ENCODE measurements at regions of chr10 and their contacts with region 1.

Region 1: GRCh38 chr10:87861953-87862678 is 1.2 kb downstream of the KLLN start:
- DNase-seq: peak; percentile 98
- H3K4me3 Mint-ChIP-seq: peak overlapping the region; percentile 87
- H3K27ac Mint-ChIP-seq: peak overlapping the region; percentile 83
- H3K4me1 Mint-ChIP-seq: peaks cover 16% of the 10 kb centered on the region
- H3K27me3 Mint-ChIP-seq: no peaks in the 10 kb centered on the region
- CTCF ChIP-seq: no peak

Region 2: GRCh38 chr10:87850742-87851205 is 11.3 kb before region 1 on chr10:
- CTCF ChIA-PET with region 1: interaction called, 9 read pairs
- POLR2A ChIA-PET with region 1: interaction called, 104 read pairs
- intact Hi-C with region 1: no loop called
- DNase-seq: peak; percentile 72
- H3K4me3 Mint-ChIP-seq: no peak overlapping the region
- H3K27ac Mint-ChIP-seq: no peak overlapping the region
- H3K4me1 Mint-ChIP-seq: peaks cover 11% of the 10 kb centered on the region
- H3K27me3 Mint-ChIP-seq: no peaks in the 10 kb centered on the region
- CTCF ChIP-seq: peak; percentile 41

Region 3: DNA sequence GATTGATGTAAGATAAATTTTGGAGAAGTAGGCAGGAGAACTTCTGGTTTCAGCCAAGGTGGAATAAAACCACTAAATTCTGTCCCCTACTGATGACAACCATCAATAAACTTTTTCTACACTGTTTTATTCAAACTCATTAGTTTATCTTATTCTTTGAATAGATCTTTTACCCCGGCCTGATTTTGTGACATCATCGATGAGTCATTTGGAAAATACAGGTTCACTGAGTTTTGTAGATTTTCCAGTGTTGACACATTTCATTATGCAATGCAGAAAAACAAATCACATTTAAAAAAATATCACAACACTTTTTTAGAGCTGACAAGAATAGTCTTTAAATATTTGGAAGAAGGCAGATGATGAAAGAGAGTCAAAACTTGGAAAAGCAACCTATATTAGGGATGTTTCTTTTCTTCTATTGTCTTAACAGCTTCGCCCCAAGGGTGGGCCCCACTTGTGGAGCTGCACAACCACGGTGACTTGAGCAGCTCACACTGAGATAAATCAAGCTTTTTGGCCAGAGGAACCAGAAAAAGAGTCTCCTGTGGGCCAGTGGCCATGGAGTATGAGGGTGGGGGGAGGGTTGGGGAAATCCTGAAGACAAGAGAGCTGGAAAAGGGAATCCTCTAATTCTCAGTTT is 114.1 kb after region 1 on chr10:
- CTCF ChIA-PET with region 1: no interaction called
- POLR2A ChIA-PET with region 1: interaction called, 10 read pairs
- intact Hi-C with region 1: loop called (anchors 5 kb)
- DNase-seq: peak; percentile 48
- H3K4me3 Mint-ChIP-seq: no peak overlapping the region
- H3K27ac Mint-ChIP-seq: peak overlapping the region; percentile 3
- H3K4me1 Mint-ChIP-seq: peaks cover 9% of the 10 kb centered on the region
- H3K27me3 Mint-ChIP-seq: no peaks in the 10 kb centered on the region
- CTCF ChIP-seq: no peak

Region 4: DNA sequence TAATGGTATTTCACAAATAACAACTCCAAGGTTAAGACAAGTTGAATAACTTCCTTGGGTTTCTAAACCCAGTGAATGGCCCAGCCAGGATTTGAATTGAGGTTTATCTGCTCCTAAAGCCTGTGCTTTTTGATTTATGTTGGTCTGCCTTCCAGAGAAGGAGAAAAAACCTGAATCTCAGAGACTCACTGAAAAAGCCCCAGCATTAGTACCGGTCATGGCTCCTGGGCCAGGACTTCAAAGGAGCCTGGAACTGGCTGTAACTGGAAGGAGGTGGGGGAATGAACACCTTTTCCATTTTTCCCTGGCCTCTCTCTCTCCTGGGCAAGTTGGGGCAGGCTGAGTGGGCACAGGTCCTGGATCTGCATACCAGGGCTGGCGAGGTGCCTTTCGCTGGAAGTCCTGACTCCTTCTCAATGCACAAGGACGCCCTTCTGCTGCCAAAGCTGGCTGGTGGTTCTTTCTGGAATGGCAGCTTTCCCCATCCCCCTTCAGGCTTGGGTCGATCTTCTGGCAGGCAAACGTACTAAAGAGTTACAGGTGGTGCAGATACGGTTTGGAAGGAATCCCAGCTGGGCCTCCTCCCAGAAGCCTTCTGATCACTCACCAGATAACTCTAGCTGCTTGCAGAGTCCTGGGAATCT is 269.5 kb after region 1 on chr10:
- CTCF ChIA-PET with region 1: interaction called, 6 read pairs
- POLR2A ChIA-PET with region 1: interaction called, 25 read pairs
- intact Hi-C with region 1: loop called (anchors 5 kb)
- DNase-seq: peak; percentile 98
- H3K4me3 Mint-ChIP-seq: peak overlapping the region; percentile 66
- H3K27ac Mint-ChIP-seq: peak overlapping the region; percentile 50
- H3K4me1 Mint-ChIP-seq: peaks cover 27% of the 10 kb centered on the region
- H3K27me3 Mint-ChIP-seq: no peaks in the 10 kb centered on the region
- CTCF ChIP-seq: peak; percentile 19

Region 5: DNA sequence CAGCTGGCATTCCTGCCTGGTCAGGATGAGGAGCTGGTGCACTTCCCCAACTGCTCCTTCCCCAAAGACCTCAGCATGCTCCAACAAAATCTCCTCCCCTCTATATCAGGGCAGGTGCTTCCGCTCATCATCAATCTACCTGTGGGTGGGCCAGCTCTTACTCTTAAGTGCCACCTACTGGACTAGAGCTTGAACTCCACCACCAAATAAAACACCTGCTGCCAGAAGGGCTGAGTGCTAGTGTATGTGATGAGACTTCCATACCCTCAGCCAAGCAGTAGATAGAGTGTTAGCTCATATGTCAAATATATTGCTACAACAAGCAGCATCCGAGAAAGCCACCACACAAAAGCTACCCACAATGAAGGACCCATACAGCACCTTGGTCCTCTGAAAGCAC is 456.7 kb after region 1 on chr10:
- CTCF ChIA-PET with region 1: no interaction called
- POLR2A ChIA-PET with region 1: no interaction called
- intact Hi-C with region 1: loop called (anchors 2 kb)
- DNase-seq: peak; percentile 9
- H3K4me3 Mint-ChIP-seq: no peak overlapping the region
- H3K27ac Mint-ChIP-seq: no peak overlapping the region
- H3K4me1 Mint-ChIP-seq: peaks cover 5% of the 10 kb centered on the region
- H3K27me3 Mint-ChIP-seq: no peaks in the 10 kb centered on the region
- CTCF ChIP-seq: peak; percentile 29

Region 6: DNA sequence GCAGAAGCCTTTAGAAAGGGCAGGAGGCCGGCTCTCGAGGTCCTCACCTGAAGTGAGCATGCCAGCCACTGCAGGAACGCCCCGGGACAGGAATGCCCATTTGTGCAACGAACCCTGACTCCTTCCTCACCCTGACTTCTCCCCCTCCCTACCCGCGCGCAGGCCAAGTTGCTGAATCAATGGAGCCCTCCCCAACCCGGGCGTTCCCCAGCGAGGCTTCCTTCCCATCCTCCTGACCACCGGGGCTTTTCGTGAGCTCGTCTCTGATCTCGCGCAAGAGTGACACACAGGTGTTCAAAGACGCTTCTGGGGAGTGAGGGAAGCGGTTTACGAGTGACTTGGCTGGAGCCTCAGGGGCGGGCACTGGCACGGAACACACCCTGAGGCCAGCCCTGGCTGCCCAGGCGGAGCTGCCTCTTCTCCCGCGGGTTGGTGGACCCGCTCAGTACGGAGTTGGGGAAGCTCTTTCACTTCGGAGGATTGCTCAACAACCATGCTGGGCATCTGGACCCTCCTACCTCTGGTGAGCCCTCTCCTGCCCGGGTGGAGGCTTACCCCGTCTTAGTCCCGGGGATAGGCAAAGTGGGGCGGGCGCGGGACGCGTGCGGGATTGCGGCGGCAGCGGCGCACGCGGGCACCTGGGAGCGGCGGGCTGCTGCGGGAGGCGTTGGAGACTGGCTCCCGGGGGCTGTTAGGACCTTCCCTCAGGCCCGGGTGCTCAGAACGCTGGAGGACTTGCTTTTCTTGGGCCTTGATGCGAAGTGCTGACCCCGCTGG is 1128.5 kb after region 1 on chr10 and contains the start of gene FAS:
- CTCF ChIA-PET with region 1: no interaction called
- POLR2A ChIA-PET with region 1: interaction called, 15 read pairs
- intact Hi-C with region 1: no loop called
- DNase-seq: peak; percentile 95
- H3K4me3 Mint-ChIP-seq: peak within 1 kb of the TSS; percentile 86
- H3K27ac Mint-ChIP-seq: peak within 1 kb of the TSS; percentile 93
- H3K4me1 Mint-ChIP-seq: peaks cover 23% of the 10 kb centered on the region
- H3K27me3 Mint-ChIP-seq: no peaks in the 10 kb centered on the region
- CTCF ChIP-seq: no peak
- total RNA-seq, gene FAS: 55.6 and 60.2 TPM in 2 replicates